HepG2 (cell line): ENCODE measurements at regions of chr10 and their contacts with region 1.

Region 1: GRCh38 chr10:63268798-63269503 is 135.8 kb downstream of the NRBF2 start:
- DNase-seq: peak; percentile 92
- ATAC-seq: peak; percentile 95
- H3K4me3 ChIP-seq: peak overlapping the region; percentile 61 to 100 (median 79)
- H3K27ac ChIP-seq: peak overlapping the region; percentile 99
- H3K4me1 ChIP-seq: peaks cover 21% of the 10 kb centered on the region
- H3K27me3 ChIP-seq: no peaks in the 10 kb centered on the region; a peak in 2 of 5 replicates
- CTCF ChIP-seq: no peak
- EP300 ChIP-seq: no peak
- POLR2A ChIP-seq: peak; percentile 84 to 96
- RAD21 ChIP-seq: no peak

Region 2: GRCh38 chr10:63217120-63217605 is 51.8 kb before region 1 on chr10:
- CTCF ChIA-PET with region 1: no interaction called
- POLR2A ChIA-PET with region 1: no interaction called
- in situ Hi-C with region 1: no loop called
- intact Hi-C with region 1: loop called (anchors 2 kb)
- DNase-seq: peak; percentile 44
- ATAC-seq: peak; percentile 88
- H3K4me3 ChIP-seq: no peak overlapping the region
- H3K27ac ChIP-seq: no peak overlapping the region
- H3K4me1 ChIP-seq: no peaks in the 10 kb centered on the region
- H3K27me3 ChIP-seq: no peaks in the 10 kb centered on the region; a peak in 1 of 5 replicates
- CTCF ChIP-seq: peak; percentile 57
- EP300 ChIP-seq: no peak
- POLR2A ChIP-seq: no peak
- RAD21 ChIP-seq: no peak

Region 3: GRCh38 chr10:63256009-63256773 is 12.8 kb before region 1 on chr10:
- CTCF ChIA-PET with region 1: no interaction called
- POLR2A ChIA-PET with region 1: interaction called, 30 read pairs
- in situ Hi-C with region 1: no loop called
- intact Hi-C with region 1: no loop called
- DNase-seq: no peak
- ATAC-seq: no peak
- H3K4me3 ChIP-seq: no peak overlapping the region
- H3K27ac ChIP-seq: no peak overlapping the region
- H3K4me1 ChIP-seq: peaks cover 73% of the 10 kb centered on the region
- H3K27me3 ChIP-seq: no peaks in the 10 kb centered on the region
- CTCF ChIP-seq: no peak
- EP300 ChIP-seq: no peak
- POLR2A ChIP-seq: no peak
- RAD21 ChIP-seq: no peak

Region 4: GRCh38 chr10:63286754-63287264 is 17.9 kb after region 1 on chr10:
- CTCF ChIA-PET with region 1: no interaction called
- POLR2A ChIA-PET with region 1: interaction called, 10 read pairs
- in situ Hi-C with region 1: no loop called
- intact Hi-C with region 1: no loop called
- DNase-seq: no peak
- ATAC-seq: no peak
- H3K4me3 ChIP-seq: no peak overlapping the region
- H3K27ac ChIP-seq: peak overlapping the region; percentile 31
- H3K4me1 ChIP-seq: peaks cover 59% of the 10 kb centered on the region
- H3K27me3 ChIP-seq: no peaks in the 10 kb centered on the region
- CTCF ChIP-seq: no peak
- EP300 ChIP-seq: no peak
- POLR2A ChIP-seq: no peak
- RAD21 ChIP-seq: no peak

Region 5: DNA sequence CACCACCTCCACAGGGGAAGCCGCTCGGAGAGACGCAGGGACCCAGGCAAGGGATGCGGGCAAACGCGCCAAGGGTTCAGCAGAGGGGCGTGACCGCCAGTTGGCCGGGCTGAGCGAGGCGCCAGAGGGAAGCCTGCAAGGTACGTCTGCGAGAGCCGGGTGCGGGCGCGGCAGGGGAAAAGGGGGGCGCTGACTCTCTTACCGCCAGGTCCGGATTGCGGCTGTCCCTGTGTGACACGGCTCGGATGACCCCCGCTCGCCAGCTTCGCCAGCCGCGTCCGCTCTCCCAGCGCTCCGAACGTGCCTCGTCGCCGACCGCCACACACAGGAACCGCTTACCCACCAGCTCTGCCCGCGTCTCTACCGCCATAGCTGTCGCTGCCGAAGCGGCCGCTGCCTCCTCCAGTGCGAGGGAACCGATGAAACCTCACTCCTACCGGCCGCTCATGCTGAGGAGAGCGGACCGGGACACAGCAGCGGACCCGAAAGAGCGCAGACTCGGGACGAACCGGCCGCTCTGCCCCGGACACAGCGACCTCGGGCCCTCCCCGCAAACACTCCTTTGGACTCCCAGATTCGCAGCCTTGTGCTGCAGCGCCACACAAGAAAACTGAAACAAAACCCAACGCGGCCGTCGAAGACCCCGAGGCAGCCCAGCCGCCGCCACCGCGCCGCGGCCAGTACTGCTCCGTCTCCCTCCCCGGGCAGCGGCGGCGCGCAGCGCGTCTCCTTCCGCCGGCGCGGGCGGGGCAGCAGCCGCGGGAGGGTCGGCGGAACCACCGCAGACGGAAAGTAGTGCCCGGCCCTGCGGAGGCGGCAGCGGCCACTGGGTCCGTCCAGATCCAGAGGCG is 196.6 kb after region 1 on chr10 and contains the start of gene JMJD1C:
- CTCF ChIA-PET with region 1: no interaction called
- POLR2A ChIA-PET with region 1: interaction called, 4 read pairs
- in situ Hi-C with region 1: no loop called
- intact Hi-C with region 1: loop called (anchors 5 kb)
- DNase-seq: peak; percentile 62
- ATAC-seq: peak; percentile 88
- H3K4me3 ChIP-seq: peak within 1 kb of the TSS; percentile 78 to 98 (median 96)
- H3K27ac ChIP-seq: peak within 1 kb of the TSS; percentile 97
- H3K4me1 ChIP-seq: peaks cover 49% of the 10 kb centered on the region
- H3K27me3 ChIP-seq: no peaks in the 10 kb centered on the region; a peak in 1 of 5 replicates
- CTCF ChIP-seq: peak; percentile 57
- EP300 ChIP-seq: peak; percentile 30 to 56; a peak in 2 of 4 replicates
- POLR2A ChIP-seq: peak; percentile 70 to 83
- RAD21 ChIP-seq: peak; percentile 71
- total RNA-seq, gene JMJD1C: 42.7 and 51.4 TPM in 2 replicates

Region 6: GRCh38 chr10:63521416-63522276 is 252.7 kb after region 1 on chr10:
- CTCF ChIA-PET with region 1: no interaction called
- POLR2A ChIA-PET with region 1: interaction called, 12 read pairs
- in situ Hi-C with region 1: no loop called
- intact Hi-C with region 1: loop called (anchors 5 kb)
- DNase-seq: peak; percentile 46
- ATAC-seq: peak; percentile 89
- H3K4me3 ChIP-seq: peak overlapping the region; percentile 74 to 94 (median 87)
- H3K27ac ChIP-seq: peak overlapping the region; percentile 99
- H3K4me1 ChIP-seq: peaks cover 76% of the 10 kb centered on the region
- H3K27me3 ChIP-seq: no peaks in the 10 kb centered on the region
- CTCF ChIP-seq: no peak
- EP300 ChIP-seq: peak in 1 of 2 experiments; percentile 32; a peak in 1 of 4 replicates
- POLR2A ChIP-seq: peak; percentile 65
- RAD21 ChIP-seq: peak; percentile 47